MCF 10A (cell line): ENCODE measurements at regions of chr17 and their contacts with region 1.

Region 1: DNA sequence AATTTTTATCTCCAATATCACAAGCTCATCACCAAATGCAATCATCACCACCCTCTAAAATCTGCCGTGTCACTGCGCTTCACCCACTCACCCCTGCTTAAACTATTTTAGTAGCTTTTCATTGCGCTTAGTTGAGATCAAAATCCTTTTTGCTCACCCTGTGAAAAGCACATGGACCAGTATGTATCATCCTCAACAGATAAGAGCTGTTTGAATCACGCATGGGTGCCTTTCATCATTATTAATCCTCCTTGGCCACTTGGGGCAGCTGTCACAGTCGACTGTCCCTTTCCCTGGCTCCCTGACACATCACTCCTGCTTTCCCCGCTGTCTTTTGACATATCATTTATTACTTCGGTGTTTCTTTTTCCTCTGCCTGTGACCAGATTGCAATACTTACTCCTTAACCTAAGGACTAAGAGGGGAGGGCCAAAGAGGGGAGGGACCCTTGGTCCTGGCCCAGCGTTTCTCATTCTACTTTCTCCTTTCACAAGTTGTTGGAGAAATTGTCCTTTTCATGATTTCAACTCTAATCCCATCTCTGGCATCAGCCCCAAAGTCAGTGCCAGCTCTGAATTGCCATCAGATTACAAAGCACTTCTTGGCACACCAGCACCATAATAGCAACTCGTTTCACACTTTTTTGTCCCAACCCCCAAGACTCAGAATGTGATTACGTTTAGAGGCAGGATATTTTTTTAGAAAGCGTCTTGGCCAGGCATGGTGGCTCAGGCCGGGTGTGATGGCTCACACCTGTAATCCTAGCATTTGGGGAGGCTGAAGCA is 8.6 kb upstream of the KDM6B start:
- DNase-seq: no peak
- H3K4me3 Mint-ChIP-seq: no peak overlapping the region
- H3K27ac Mint-ChIP-seq: no peak overlapping the region
- H3K4me1 Mint-ChIP-seq: peaks cover 22% of the 10 kb centered on the region
- H3K27me3 Mint-ChIP-seq: peaks cover 22% of the 10 kb centered on the region
- CTCF ChIP-seq: no peak

Region 2: GRCh38 chr17:7147772-7148171 is 677.6 kb before region 1 on chr17:
- CTCF ChIA-PET with region 1: no interaction called
- POLR2A ChIA-PET with region 1: no interaction called
- intact Hi-C with region 1: no loop called
- DNase-seq: no peak
- H3K4me3 Mint-ChIP-seq: no peak overlapping the region
- H3K27ac Mint-ChIP-seq: no peak overlapping the region
- H3K4me1 Mint-ChIP-seq: no peaks in the 10 kb centered on the region
- H3K27me3 Mint-ChIP-seq: peaks cover 14% of the 10 kb centered on the region
- CTCF ChIP-seq: no peak

Region 3: GRCh38 chr17:7844292-7845154 is 19.1 kb after region 1 on chr17:
- CTCF ChIA-PET with region 1: interaction called, 5 read pairs
- POLR2A ChIA-PET with region 1: interaction called, 14 read pairs
- intact Hi-C with region 1: no loop called
- DNase-seq: peak; percentile 96
- H3K4me3 Mint-ChIP-seq: peak overlapping the region; percentile 79
- H3K27ac Mint-ChIP-seq: peak overlapping the region; percentile 87
- H3K4me1 Mint-ChIP-seq: peaks cover 27% of the 10 kb centered on the region
- H3K27me3 Mint-ChIP-seq: no peaks in the 10 kb centered on the region
- CTCF ChIP-seq: no peak

Region 4: GRCh38 chr17:7851438-7852256 is 26.2 kb after region 1 on chr17:
- CTCF ChIA-PET with region 1: interaction called, 27 read pairs
- POLR2A ChIA-PET with region 1: no interaction called
- intact Hi-C with region 1: loop called (anchors 1 kb)
- DNase-seq: peak; percentile 85
- H3K4me3 Mint-ChIP-seq: no peak overlapping the region
- H3K27ac Mint-ChIP-seq: peak overlapping the region; percentile 16
- H3K4me1 Mint-ChIP-seq: peaks cover 7% of the 10 kb centered on the region
- H3K27me3 Mint-ChIP-seq: no peaks in the 10 kb centered on the region
- CTCF ChIP-seq: peak; percentile 91